ENCODE measurements at regions of chr16 and their contacts with region 1.

Region 1: GRCh38 chr16:87636072-87636684 is 33.9 kb downstream of the JPH3 start:
- DNase-seq: peak; percentile 87
- H3K4me3 Mint-ChIP-seq: peak overlapping the region; percentile 60
- H3K27ac Mint-ChIP-seq: no peak overlapping the region
- H3K4me1 Mint-ChIP-seq: peaks cover 17% of the 10 kb centered on the region
- H3K27me3 Mint-ChIP-seq: peaks cover 32% of the 10 kb centered on the region

Region 2: GRCh38 chr16:87393680-87394055 is 242.5 kb before region 1 on chr16:
- CTCF ChIA-PET with region 1: interaction called, 18 read pairs
- DNase-seq: no peak
- H3K4me3 Mint-ChIP-seq: peak overlapping the region; percentile 90
- H3K27ac Mint-ChIP-seq: peak overlapping the region; percentile 93
- H3K4me1 Mint-ChIP-seq: peaks cover 41% of the 10 kb centered on the region
- H3K27me3 Mint-ChIP-seq: no peaks in the 10 kb centered on the region

Region 3: GRCh38 chr16:87416826-87417527 is 219.2 kb before region 1 on chr16:
- CTCF ChIA-PET with region 1: interaction called, 28 read pairs
- DNase-seq: peak; percentile 60
- H3K4me3 Mint-ChIP-seq: no peak overlapping the region
- H3K27ac Mint-ChIP-seq: no peak overlapping the region
- H3K4me1 Mint-ChIP-seq: no peaks in the 10 kb centered on the region
- H3K27me3 Mint-ChIP-seq: no peaks in the 10 kb centered on the region

Region 4: DNA sequence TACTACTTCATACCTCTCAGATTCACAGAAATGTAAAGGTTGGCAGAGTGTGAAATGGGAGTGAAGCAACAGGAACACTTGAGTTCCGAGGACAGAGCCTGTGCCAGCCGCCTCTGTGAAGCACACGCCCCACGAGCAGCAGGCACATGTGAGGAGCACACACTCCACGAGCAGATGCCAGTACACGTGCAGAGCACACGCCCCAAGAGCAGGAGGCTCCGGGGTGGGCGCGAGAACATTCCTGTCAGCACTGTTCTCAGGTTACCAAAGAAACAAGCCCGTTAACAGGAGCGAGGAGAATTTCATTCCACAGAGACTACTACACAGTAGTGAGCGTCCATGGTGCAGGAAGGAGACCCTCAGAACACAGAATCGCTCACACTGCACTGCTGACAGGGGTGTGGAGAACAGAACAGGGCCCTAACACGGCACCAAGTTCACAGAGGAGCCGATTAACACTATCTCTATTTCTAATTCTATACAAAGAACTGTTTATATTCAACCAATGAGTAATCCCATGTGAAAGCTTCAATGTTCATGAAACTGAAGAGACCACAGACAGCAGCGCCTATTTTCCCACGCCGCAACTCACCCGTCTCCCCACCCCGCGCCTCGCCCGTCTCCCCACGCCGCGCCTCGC is 89.5 kb after region 1 on chr16:
- CTCF ChIA-PET with region 1: no interaction called
- DNase-seq: no peak
- H3K4me3 Mint-ChIP-seq: no peak overlapping the region
- H3K27ac Mint-ChIP-seq: peak overlapping the region; percentile 54
- H3K4me1 Mint-ChIP-seq: peaks cover 7% of the 10 kb centered on the region
- H3K27me3 Mint-ChIP-seq: no peaks in the 10 kb centered on the region

Region 5: GRCh38 chr16:87765776-87766484 is 129.8 kb after region 1 on chr16 and contains the start of gene KLHDC4:
- CTCF ChIA-PET with region 1: interaction called, 14 read pairs
- DNase-seq: peak; percentile 94
- H3K4me3 Mint-ChIP-seq: peak within 1 kb of the TSS; percentile 100
- H3K27ac Mint-ChIP-seq: peak within 1 kb of the TSS; percentile 100
- H3K4me1 Mint-ChIP-seq: peaks cover 53% of the 10 kb centered on the region
- H3K27me3 Mint-ChIP-seq: peaks cover 4% of the 10 kb centered on the region